WTC11 (cell line): ENCODE measurements at regions of chr2 and their contacts with region 1.

Region 1: GRCh38 chr2:128232965-128233789 is 85.5 kb downstream of the HS6ST1 start:
- DNase-seq: peak; percentile 91
- ATAC-seq: peak; percentile 90
- H3K4me3 Mint-ChIP-seq: peak overlapping the region; percentile 69
- H3K27ac Mint-ChIP-seq: no peak overlapping the region
- H3K4me1 Mint-ChIP-seq: peaks cover 5% of the 10 kb centered on the region; the same call in 1 of the 2 replicates
- H3K27me3 Mint-ChIP-seq: peaks cover 30% of the 10 kb centered on the region
- CTCF ChIP-seq: peak; percentile 79

Region 2: DNA sequence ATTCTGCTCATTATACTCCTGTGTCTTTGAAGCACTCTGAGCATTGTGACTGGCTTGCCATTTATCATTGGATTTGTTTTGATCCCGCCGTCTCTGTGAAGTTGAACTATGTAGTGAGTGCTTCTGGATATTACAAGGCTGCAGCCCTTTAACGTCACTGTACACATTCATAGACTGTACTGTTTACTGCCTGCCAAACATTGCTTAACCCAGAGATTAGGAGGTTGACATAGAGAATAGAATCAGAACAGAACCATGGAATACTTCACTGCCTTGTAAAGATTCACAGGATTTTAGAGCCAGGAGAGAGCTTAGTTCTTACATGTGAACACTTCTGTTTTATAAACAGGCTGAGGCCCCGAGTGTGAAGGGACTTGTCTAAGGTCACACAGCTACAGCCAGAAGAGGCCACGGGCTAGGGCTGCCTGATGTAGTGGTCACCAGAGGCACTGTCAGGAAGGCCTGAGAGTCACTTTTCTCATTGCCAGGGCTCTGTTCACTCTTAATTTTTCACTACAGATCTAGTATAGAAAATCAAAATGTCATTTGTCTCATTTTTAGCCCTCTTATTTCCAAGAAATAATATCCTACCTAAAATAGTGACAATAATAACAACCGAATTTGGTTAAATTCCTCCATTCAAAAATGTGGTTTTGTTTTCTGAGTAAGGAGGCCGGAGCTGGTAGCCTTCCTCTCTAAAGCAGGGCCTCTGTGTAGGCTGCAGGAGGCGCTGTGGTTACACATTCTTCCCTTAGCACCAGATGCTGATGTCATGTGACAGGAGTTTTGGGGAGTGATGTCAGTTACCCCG is 54.3 kb before region 1 on chr2:
- CTCF ChIA-PET with region 1: interaction called, 10 read pairs
- POLR2A ChIA-PET with region 1: no interaction called
- DNase-seq: peak; percentile 67
- ATAC-seq: peak; percentile 84
- H3K4me3 Mint-ChIP-seq: no peak overlapping the region
- H3K27ac Mint-ChIP-seq: no peak overlapping the region
- H3K4me1 Mint-ChIP-seq: no peaks in the 10 kb centered on the region
- H3K27me3 Mint-ChIP-seq: no peaks in the 10 kb centered on the region
- CTCF ChIP-seq: peak; percentile 61

Region 3: DNA sequence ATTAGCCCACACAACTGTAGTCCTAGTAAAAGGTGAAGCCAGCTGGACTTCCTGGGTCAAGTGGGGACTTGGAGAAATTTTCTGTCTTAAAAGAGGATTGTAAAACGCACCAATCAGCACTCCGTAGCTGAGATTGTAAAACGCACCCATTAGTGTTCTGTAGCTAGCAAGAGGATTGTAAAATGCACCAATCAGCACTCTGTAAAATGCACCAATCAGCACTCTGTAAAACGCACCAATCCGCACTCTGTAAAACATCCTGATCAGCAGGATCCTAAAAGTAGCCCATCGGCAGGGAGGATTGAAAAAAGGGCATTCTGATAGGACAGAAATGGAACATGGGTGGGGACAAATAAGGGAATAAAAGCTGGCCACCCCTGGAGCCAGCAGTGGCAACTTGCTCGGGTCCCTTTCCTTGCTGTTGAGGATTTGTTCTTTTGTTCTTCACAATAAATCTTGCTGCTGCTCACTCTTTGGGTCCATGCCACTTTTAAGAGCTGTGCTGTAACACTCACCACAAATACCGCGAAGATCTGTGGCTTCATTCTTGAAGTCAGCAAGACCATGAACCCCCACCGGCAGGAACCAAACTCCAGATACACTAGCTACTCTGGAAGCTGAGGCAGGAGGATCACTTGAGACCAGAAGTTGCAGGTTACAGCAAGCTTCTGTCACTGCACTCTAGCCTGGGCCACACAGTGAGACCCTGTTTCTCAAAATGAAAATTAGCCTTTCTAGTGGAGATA is 17.1 kb before region 1 on chr2:
- CTCF ChIA-PET with region 1: no interaction called
- POLR2A ChIA-PET with region 1: no interaction called
- DNase-seq: no peak
- ATAC-seq: no peak
- H3K4me3 Mint-ChIP-seq: no peak overlapping the region
- H3K27ac Mint-ChIP-seq: no peak overlapping the region
- H3K4me1 Mint-ChIP-seq: peaks cover 5% of the 10 kb centered on the region; the same call in 1 of the 2 replicates
- H3K27me3 Mint-ChIP-seq: no peaks in the 10 kb centered on the region; the same call in 1 of the 2 replicates
- CTCF ChIP-seq: no peak